ENCODE measurements at regions of chr5 and their contacts with region 1.

Region 1: DNA sequence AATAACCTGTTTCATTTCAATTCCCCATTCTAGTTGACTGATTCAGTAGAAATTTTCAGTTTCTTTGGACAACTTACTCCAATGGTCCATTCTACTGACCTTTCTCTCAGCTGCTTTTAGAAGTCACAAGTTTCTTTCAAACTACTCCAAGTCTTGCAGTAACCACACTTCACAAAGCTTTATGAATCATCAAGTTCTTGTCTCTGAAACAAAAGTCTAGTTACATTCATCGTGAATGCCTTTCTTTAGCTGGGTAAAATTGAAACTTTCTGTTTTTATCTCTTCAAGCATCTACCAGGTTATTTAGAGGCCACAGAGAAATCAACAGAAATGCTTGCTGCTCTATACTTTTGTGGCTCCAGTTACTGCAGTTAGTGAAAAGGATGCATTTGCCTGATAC is 405.4 kb downstream of the TMEM232 start:
- DNase-seq: no peak
- H3K4me3 Mint-ChIP-seq: no peak overlapping the region
- H3K27ac Mint-ChIP-seq: no peak overlapping the region
- H3K4me1 Mint-ChIP-seq: peaks cover 16% of the 10 kb centered on the region
- H3K27me3 Mint-ChIP-seq: no peaks in the 10 kb centered on the region

Region 2: GRCh38 chr5:110063640-110064602 is 257.2 kb before region 1 on chr5:
- intact Hi-C with region 1: loop called (anchors 5 kb)
- DNase-seq: no peak
- H3K4me3 Mint-ChIP-seq: no peak overlapping the region
- H3K27ac Mint-ChIP-seq: no peak overlapping the region
- H3K4me1 Mint-ChIP-seq: peaks cover 38% of the 10 kb centered on the region
- H3K27me3 Mint-ChIP-seq: no peaks in the 10 kb centered on the region

Region 3: GRCh38 chr5:110351430-110351829 is 30.3 kb after region 1 on chr5:
- intact Hi-C with region 1: no loop called
- DNase-seq: no peak
- H3K4me3 Mint-ChIP-seq: no peak overlapping the region
- H3K27ac Mint-ChIP-seq: no peak overlapping the region
- H3K4me1 Mint-ChIP-seq: no peaks in the 10 kb centered on the region
- H3K27me3 Mint-ChIP-seq: no peaks in the 10 kb centered on the region

Measured in activated T-helper 2 cell treated with anti-CD3 and anti-CD28 coated beads, Interferon-gamma antibody, Interleukin-2, Interleukin-4, amounts not matched to agents 10 μg/mL and 5 μg/mL and 100 μg/mL, durations not matched to agents 14 hours and 24 hours and 36 hours (primary cell).